CD8-positive, alpha-beta memory T cell (primary cell): ENCODE measurements at regions of chr2 and their contacts with region 1.

Region 1: GRCh38 chr2:134918526-134919340 is at the start of gene CCNT2:
- DNase-seq: peak; percentile 99 to 100 (median 100)
- H3K4me3 ChIP-seq: peak within 1 kb of the TSS; percentile 91
- H3K4me3 Mint-ChIP-seq: peak within 1 kb of the TSS; percentile 89 to 99 (median 91)
- H3K27ac ChIP-seq: peak within 1 kb of the TSS; percentile 96
- H3K27ac Mint-ChIP-seq: peak within 1 kb of the TSS; percentile 91 to 100 (median 98)
- H3K4me1 ChIP-seq: peaks cover 49% of the 10 kb centered on the region
- H3K4me1 Mint-ChIP-seq: peaks cover 50 to 67% (median 57%) of the 10 kb centered on the region in 3 donors
- H3K27me3 ChIP-seq: no peaks in the 10 kb centered on the region
- H3K27me3 Mint-ChIP-seq: peaks cover 4 to 6% of the 10 kb centered on the region in 2 donors
- total RNA-seq, gene CCNT2: 35.1 to 36.8 TPM

Region 2: GRCh38 chr2:135531231-135532228 is 612.8 kb after region 1 on chr2 and contains the start of gene R3HDM1:
- CTCF ChIA-PET with region 1: interaction called, 3 read pairs
- POLR2A ChIA-PET with region 1: interaction called, 15 read pairs
- DNase-seq: peak; percentile 89 to 98 (median 97)
- H3K4me3 ChIP-seq: peak within 1 kb of the TSS; percentile 98
- H3K4me3 Mint-ChIP-seq: no peak within 1 kb of the TSS
- H3K27ac ChIP-seq: peak within 1 kb of the TSS; percentile 97
- H3K27ac Mint-ChIP-seq: peak within 1 kb of the TSS in 6 of 8 donors; percentile 36 to 92 (median 75)
- H3K4me1 ChIP-seq: peaks cover 7% of the 10 kb centered on the region
- H3K4me1 Mint-ChIP-seq: peaks cover 22 to 38% (median 37%) of the 10 kb centered on the region in 3 donors
- H3K27me3 ChIP-seq: no peaks in the 10 kb centered on the region
- H3K27me3 Mint-ChIP-seq: no peaks in the 10 kb centered on the region
- total RNA-seq, gene R3HDM1: 49.7 to 52.6 TPM